ENCODE measurements at regions of chr7 and their contacts with region 1.

Region 1: DNA sequence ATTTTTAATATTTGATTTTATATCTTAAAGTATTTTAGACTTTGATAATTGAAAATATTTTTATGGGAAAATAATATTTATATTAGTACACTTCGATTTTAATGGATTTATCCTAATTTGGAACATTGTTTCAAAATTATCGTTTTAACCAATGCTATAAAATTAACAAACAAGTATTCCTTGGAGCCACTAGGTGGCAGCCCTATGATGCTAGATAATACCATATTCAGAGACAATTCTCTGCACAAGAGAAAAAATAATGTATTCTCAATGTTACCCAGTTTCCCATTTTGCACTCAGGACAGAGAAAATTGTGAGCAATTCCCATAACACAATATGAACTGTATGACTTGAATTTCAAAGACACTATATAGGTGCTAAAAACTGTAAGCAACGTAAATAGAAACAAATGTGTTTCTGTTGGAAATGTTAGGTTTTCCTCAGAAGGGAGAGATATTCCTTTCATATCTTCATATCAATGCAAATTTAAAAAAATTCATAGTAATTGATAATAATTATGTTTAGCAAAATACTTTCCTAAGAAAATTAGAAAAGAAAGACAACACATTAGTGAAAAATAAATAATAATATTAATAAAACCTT is 237.8 kb downstream of the SEMA3E start:
- DNase-seq: no peak
- H3K4me3 ChIP-seq: no peak overlapping the region
- H3K27ac ChIP-seq: no peak overlapping the region
- H3K4me1 ChIP-seq: no peaks in the 10 kb centered on the region
- H3K27me3 ChIP-seq: no peaks in the 10 kb centered on the region
- CTCF ChIP-seq: peak; percentile 69

Region 2: DNA sequence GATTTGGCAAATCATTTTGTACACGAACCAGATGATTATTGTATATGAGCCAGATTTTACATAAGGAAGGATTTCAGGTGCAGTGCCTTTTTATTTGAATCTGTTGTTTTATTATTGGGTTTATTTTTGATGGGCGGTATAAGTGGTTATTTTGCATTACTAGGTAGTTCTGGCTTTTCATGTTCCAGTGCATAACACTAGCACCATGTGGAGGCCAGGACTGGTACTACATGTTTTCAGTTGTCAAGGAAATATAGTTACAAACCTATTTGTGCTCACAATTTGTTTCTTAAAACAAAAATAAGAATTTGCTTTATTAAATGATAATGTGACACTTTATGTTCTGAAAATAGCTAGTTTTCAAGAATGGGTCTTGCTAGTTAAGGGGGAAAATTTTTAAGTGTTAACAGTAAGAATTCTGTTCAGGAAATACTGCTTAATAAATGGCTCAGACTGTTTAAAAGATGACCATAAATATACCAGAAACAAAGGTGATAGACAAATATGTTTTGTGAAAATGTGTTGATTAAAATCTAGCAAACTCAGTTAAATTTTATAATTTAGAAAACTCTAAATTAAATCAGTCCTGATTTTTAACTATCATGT is 245.0 kb after region 1 on chr7:
- intact Hi-C with region 1: loop called (anchors 5 kb)
- DNase-seq: no peak
- H3K4me3 ChIP-seq: no peak overlapping the region
- H3K27ac ChIP-seq: no peak overlapping the region
- H3K4me1 ChIP-seq: no peaks in the 10 kb centered on the region
- H3K27me3 ChIP-seq: peaks cover 16% of the 10 kb centered on the region
- CTCF ChIP-seq: peak; percentile 70